Activated naive CD4-positive, alpha-beta T cell treated with anti-CD3 and anti-CD28 coated beads for 36 hours (primary cell): ENCODE measurements at regions of chr9 and their contacts with region 1.

Region 1: GRCh38 chr9:69012696-69013381 is 1.1 kb downstream of the PRKACG start:
- DNase-seq: no peak
- H3K4me3 Mint-ChIP-seq: no peak overlapping the region
- H3K27ac Mint-ChIP-seq: no peak overlapping the region
- H3K4me1 Mint-ChIP-seq: peaks cover 11% of the 10 kb centered on the region
- H3K27me3 Mint-ChIP-seq: peaks cover 11% of the 10 kb centered on the region

Region 2: GRCh38 chr9:68685770-68686169 is 327.1 kb before region 1 on chr9:
- CTCF ChIA-PET with region 1: no interaction called
- intact Hi-C with region 1: loop called (anchors 5 kb)
- DNase-seq: peak; percentile 61
- H3K4me3 Mint-ChIP-seq: no peak overlapping the region
- H3K27ac Mint-ChIP-seq: no peak overlapping the region
- H3K4me1 Mint-ChIP-seq: peaks cover 5% of the 10 kb centered on the region
- H3K27me3 Mint-ChIP-seq: peaks cover 16% of the 10 kb centered on the region